Thyroid gland (tissue), 4 donors: ENCODE measurements at regions of chr11 and their contacts with region 1.

Region 1: GRCh38 chr11:118170882-118171268 is 5.6 kb downstream of the SCN2B start:
- DNase-seq: peak; percentile 42 to 46
- H3K4me3 ChIP-seq: no peak overlapping the region
- H3K27ac ChIP-seq: no peak overlapping the region
- H3K4me1 ChIP-seq: peaks cover 6 to 22% of the 10 kb centered on the region in 2 donors
- H3K27me3 ChIP-seq: no peaks in the 10 kb centered on the region
- CTCF ChIP-seq: no peak
- POLR2A ChIP-seq: no peak

Region 2: GRCh38 chr11:118145285-118146227 is 25.3 kb before region 1 on chr11:
- intact Hi-C with region 1: loop called (anchors 1 kb)
- DNase-seq: peak; percentile 93
- H3K4me3 ChIP-seq: peak overlapping the region; percentile 5 to 55 (median 12)
- H3K27ac ChIP-seq: peak overlapping the region in 2 of 3 donors; percentile 34 to 46
- H3K4me1 ChIP-seq: peaks cover 5 to 6% of the 10 kb centered on the region in 2 donors
- H3K27me3 ChIP-seq: peaks cover 5% of the 10 kb centered on the region
- CTCF ChIP-seq: peak; percentile 80 to 97 (median 90)
- POLR2A ChIP-seq: no peak